Activated CD4-positive, alpha-beta memory T cell treated with anti-CD3 and anti-CD28 coated beads for 36 hours (primary cell): ENCODE measurements at regions of chr19 and their contacts with region 1.

Region 1: GRCh38 chr19:14198384-14199376 is 7.3 kb downstream of the ADGRL1 start:
- DNase-seq: no peak
- H3K4me3 Mint-ChIP-seq: no peak overlapping the region
- H3K27ac Mint-ChIP-seq: no peak overlapping the region
- H3K4me1 Mint-ChIP-seq: peaks cover 18% of the 10 kb centered on the region
- H3K27me3 Mint-ChIP-seq: no peaks in the 10 kb centered on the region

Region 2: DNA sequence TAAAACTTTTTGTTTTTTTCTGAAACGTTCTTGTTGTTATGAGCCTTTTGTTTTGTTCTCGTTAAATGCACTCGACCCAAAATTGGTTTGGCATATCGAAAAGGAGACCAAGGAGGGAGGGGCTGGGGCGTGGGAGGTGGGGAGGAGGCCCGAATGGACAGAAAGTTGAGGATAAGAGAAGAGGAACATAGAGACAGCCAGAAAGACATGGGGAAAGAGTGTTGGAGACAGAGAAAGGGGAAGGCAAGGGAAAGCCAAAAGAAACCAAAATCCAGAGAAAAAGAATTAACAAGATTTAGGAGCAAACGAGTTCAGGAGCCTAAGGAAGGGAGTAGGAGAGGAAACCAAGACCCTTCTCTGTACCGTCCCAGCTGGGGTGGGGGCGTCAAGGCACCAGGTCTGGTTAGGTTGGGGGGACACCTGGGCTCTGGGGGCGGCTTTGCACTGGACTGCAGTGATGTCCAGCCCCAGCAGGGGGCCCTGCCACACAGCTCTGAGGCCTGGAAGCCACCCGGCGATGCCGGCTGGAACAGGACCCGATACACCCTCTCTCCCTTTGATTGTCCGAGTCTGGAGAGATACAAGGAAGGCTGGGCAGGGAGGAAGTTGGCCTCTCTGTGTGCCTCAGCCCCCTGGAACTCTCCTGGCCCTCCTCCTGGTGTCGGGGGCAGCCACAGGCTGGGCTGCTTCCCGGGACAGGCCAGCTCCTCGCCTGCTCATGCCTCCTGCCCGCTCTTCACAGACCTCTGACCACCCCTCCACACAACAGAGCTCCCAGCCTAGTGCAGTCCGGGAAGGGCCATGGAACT is 50.7 kb before region 1 on chr19:
- CTCF ChIA-PET with region 1: interaction called, 5 read pairs
- POLR2A ChIA-PET with region 1: no interaction called
- intact Hi-C with region 1: loop called (anchors 10 kb)
- DNase-seq: peak; percentile 73
- H3K4me3 Mint-ChIP-seq: no peak overlapping the region
- H3K27ac Mint-ChIP-seq: peak overlapping the region; percentile 92
- H3K4me1 Mint-ChIP-seq: peaks cover 38% of the 10 kb centered on the region
- H3K27me3 Mint-ChIP-seq: no peaks in the 10 kb centered on the region

Region 3: GRCh38 chr19:14183741-14184350 is 14.8 kb before region 1 on chr19:
- CTCF ChIA-PET with region 1: interaction called, 13 read pairs
- POLR2A ChIA-PET with region 1: no interaction called
- intact Hi-C with region 1: no loop called
- DNase-seq: no peak
- H3K4me3 Mint-ChIP-seq: no peak overlapping the region
- H3K27ac Mint-ChIP-seq: no peak overlapping the region
- H3K4me1 Mint-ChIP-seq: no peaks in the 10 kb centered on the region
- H3K27me3 Mint-ChIP-seq: no peaks in the 10 kb centered on the region

Region 4: GRCh38 chr19:14265290-14266036 is 66.8 kb after region 1 on chr19:
- CTCF ChIA-PET with region 1: no interaction called
- POLR2A ChIA-PET with region 1: no interaction called
- intact Hi-C with region 1: no loop called
- DNase-seq: no peak
- H3K4me3 Mint-ChIP-seq: no peak overlapping the region
- H3K27ac Mint-ChIP-seq: no peak overlapping the region
- H3K4me1 Mint-ChIP-seq: no peaks in the 10 kb centered on the region
- H3K27me3 Mint-ChIP-seq: no peaks in the 10 kb centered on the region

Region 5: DNA sequence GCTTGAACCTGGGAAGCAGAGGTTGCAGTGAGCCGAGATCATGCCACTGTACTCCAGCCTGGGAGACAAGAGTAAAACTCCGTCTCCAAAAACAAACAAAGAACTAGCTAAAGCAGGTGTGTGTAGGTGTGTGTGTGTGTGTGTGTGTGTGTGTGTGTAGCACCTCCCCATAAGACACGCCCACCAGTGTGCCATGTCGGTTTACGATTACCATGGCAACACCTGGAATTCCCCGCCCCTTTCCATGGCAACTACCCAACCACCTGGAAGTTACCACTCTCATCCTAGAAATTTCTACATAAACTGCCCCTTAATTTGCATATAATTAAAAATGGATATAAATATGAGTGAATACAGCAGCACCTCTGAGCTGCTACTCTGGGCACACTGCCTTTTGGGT is 101.6 kb after region 1 on chr19:
- CTCF ChIA-PET with region 1: no interaction called
- POLR2A ChIA-PET with region 1: no interaction called
- intact Hi-C with region 1: no loop called
- DNase-seq: no peak
- H3K4me3 Mint-ChIP-seq: no peak overlapping the region
- H3K27ac Mint-ChIP-seq: no peak overlapping the region
- H3K4me1 Mint-ChIP-seq: no peaks in the 10 kb centered on the region
- H3K27me3 Mint-ChIP-seq: no peaks in the 10 kb centered on the region

Region 6: GRCh38 chr19:14337510-14337909 is 138.8 kb after region 1 on chr19:
- CTCF ChIA-PET with region 1: interaction called, 16 read pairs
- POLR2A ChIA-PET with region 1: no interaction called
- intact Hi-C with region 1: no loop called
- DNase-seq: peak; percentile 58
- H3K4me3 Mint-ChIP-seq: no peak overlapping the region
- H3K27ac Mint-ChIP-seq: no peak overlapping the region
- H3K4me1 Mint-ChIP-seq: peaks cover 9% of the 10 kb centered on the region
- H3K27me3 Mint-ChIP-seq: no peaks in the 10 kb centered on the region

Region 7: DNA sequence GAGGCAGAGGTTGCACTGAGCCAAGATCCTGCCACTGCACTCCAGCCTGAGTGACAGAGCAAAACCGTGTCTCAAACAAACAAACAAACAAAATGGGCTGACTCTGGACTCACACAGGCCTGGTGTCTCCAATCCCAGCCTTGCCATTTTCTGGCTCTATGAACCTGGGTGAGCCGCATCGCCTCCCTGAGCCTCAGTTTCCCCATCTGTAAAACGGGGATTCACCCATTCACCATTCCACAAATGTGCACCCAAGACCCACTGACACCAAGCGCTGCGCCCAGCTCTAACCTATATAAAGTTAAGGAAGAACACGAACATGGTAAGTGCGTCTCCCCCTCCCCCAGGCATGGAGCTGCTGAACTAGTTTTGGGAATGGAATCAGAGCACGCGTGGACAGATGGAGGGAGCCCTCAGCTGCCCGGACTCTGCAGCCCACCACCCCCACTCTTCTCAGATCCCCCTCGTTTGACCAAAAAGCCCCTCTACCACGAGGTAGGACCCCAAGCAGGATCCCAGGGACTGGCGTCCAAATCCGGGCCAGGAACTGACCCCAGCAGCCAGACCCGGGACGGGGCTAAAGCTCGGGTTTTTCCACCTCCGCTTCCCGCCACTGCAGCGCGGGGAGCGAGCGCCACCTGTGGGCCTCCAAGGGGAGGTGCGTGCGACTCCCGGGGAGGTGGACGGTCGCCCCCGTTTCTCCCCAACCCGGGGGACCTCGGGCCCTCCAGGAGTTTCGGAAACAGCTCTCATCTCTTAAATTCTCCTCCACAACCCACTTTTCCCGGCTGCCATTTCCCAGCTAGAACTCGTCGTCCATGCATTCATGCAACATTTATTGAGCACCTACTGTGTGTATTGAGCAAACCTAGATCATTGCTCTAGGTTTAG is 149.6 kb after region 1 on chr19:
- CTCF ChIA-PET with region 1: interaction called, 91 read pairs
- POLR2A ChIA-PET with region 1: no interaction called
- intact Hi-C with region 1: loop called (anchors 2 kb)
- DNase-seq: peak; percentile 79
- H3K4me3 Mint-ChIP-seq: peak overlapping the region; percentile 55
- H3K27ac Mint-ChIP-seq: peak overlapping the region; percentile 45
- H3K4me1 Mint-ChIP-seq: peaks cover 22% of the 10 kb centered on the region
- H3K27me3 Mint-ChIP-seq: no peaks in the 10 kb centered on the region

Region 8: DNA sequence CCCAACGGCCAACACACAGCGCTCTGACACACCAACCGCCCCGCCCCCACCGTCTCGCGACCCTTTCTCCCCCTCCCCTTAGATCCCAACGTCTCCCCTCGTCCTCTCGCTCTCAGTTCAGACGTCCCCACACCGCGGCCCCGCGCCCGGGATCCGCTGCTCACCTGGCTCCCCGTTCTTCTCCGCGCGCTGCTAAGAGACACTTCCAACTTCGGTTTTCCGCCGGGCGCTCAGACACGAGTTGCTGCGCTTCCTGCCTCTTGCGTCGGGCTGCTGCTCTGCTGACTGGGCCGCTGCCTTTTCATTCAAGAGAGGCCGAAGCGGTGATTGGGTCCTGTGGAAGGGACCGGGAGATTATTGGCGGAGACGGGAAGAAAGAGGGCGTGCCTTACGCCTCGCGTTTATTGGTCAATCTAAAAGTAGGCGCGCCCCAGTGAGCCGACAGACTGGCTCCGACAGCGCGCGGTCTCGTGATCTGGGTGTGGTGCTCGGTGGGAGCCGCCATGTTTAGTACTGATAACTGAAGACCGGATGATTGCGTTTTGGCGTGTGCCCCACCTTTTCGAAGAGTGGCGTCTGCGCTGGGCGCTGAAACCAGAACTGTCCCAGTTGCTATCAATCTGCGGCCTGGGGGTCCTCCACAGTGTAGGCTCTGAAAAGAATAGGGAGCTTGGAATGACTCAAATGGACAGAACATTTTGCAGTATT is 220.6 kb after region 1 on chr19 and contains the start of gene DDX39A:
- CTCF ChIA-PET with region 1: no interaction called
- POLR2A ChIA-PET with region 1: no interaction called
- intact Hi-C with region 1: loop called (anchors 5 kb)
- DNase-seq: peak; percentile 99
- H3K4me3 Mint-ChIP-seq: peak within 1 kb of the TSS; percentile 95
- H3K27ac Mint-ChIP-seq: peak within 1 kb of the TSS; percentile 96
- H3K4me1 Mint-ChIP-seq: peaks cover 29% of the 10 kb centered on the region
- H3K27me3 Mint-ChIP-seq: peaks cover 2% of the 10 kb centered on the region
- total RNA-seq, gene DDX39A: 200 to 204 TPM

Region 9: DNA sequence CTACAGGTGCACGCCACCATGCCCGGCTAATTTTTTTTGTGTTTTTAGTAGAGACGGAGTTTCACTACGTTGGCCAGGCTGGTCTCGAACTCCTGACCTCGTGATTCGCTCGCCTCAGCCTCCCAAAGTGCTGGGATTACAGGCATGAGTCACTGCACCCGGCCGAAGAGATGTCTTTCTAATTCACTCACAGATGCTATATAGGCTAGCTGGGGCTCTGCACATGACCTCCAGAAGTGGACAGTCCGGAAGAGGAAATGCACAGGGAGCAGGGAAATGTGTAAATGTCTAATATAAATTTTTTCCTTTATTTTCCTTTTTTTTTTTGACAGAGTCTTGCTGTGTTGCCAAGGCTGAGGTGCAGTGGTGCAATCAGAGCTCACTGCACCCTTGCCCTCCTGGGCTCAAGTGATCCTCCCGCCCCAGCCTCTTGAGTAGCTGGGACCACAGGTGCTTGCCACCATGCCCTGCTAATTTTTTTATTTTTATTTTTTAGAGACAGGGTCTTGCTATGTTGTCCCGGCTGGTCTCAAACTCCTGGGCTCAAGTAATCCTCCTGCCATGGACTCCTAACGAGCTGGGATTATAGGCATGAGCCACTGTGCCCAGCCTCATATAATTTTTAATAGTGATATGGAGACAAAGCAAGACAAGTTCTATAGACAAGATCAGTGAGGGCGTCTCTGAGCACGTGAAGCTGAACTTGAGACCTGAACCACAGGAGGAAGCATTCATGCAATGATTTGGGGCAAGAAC is 288.9 kb after region 1 on chr19:
- CTCF ChIA-PET with region 1: no interaction called
- POLR2A ChIA-PET with region 1: no interaction called
- intact Hi-C with region 1: loop called (anchors 2 kb)
- DNase-seq: no peak
- H3K4me3 Mint-ChIP-seq: no peak overlapping the region
- H3K27ac Mint-ChIP-seq: no peak overlapping the region
- H3K4me1 Mint-ChIP-seq: peaks cover 4% of the 10 kb centered on the region
- H3K27me3 Mint-ChIP-seq: no peaks in the 10 kb centered on the region